Upper lobe of right lung (tissue), 1 donor: ENCODE measurements at regions of chr18 and their contacts with region 1.

Region 1: DNA sequence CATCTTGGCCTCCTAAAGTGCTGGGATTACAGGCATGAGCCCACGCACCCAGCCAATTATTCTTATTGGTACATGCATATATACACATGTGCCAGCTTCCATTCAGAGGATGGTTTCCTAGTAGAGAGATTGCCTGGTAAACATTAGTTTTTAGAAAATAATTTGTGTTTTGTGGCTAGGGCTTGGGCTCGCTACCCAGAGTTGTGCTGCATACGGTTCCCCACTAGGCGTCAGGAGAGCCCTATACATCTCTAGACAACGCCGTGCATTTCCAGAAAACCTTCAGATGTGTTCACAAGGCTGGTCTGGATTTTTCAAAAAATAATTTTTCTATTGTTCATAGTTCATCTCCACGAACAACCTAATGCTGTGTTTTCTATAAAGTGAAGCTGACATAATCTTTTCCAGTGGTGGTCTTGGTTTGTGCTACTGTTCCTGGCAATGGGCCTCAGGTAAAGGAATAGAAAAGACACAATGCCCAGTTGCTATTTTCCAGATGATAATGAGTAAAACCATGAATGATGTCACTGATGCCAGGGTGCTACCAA is 14.7 kb upstream of the AFG3L2 start:
- DNase-seq: peak; percentile 59
- ATAC-seq: peak; percentile 95
- H3K4me3 ChIP-seq: no peak overlapping the region
- H3K27ac ChIP-seq: no peak overlapping the region
- H3K4me1 ChIP-seq: no peaks in the 10 kb centered on the region
- H3K27me3 ChIP-seq: no peaks in the 10 kb centered on the region
- CTCF ChIP-seq: peak; percentile 92

Region 2: GRCh38 chr18:12520442-12520992 is 128.8 kb after region 1 on chr18:
- intact Hi-C with region 1: no loop called
- DNase-seq: no peak
- ATAC-seq: no peak
- H3K4me3 ChIP-seq: no peak overlapping the region
- H3K27ac ChIP-seq: no peak overlapping the region
- H3K4me1 ChIP-seq: peaks cover 13% of the 10 kb centered on the region
- H3K27me3 ChIP-seq: no peaks in the 10 kb centered on the region
- CTCF ChIP-seq: no peak

Region 3: DNA sequence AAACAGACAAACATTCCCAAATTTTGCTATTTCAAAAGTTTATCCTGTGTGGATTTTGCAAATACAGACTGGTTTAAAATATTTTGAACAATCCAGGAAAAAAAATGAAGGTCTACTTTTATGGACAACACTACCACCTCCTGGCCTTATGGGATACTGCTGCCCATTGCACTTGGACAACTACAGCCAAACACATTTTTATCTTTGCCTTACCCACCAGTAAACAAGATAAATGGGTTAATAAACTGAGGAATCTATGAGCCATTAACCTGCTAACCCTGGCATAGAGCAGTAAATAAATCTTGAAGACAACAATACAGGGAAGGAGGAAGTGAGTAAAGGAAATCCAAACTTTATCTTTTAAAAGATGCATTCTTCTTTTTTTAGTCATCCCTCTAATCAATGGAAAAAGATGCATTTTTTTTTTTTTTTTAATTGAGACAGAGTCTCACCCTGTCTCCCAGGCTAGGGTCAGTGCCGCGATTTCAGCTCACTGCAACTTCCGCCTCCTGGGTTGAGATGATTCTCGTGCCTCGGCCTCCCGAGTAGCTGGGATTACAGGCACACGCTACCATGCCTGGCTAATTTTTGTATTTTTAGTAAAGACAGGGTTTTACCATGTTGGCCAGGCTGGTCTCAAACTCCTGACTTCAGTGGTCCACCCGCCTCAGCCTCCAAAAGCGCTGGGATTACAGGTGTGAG is 268.4 kb after region 1 on chr18:
- intact Hi-C with region 1: loop called (anchors 5 kb)
- DNase-seq: no peak
- ATAC-seq: peak; percentile 48
- H3K4me3 ChIP-seq: no peak overlapping the region
- H3K27ac ChIP-seq: no peak overlapping the region
- H3K4me1 ChIP-seq: peaks cover 13% of the 10 kb centered on the region
- H3K27me3 ChIP-seq: no peaks in the 10 kb centered on the region
- CTCF ChIP-seq: peak; percentile 91